Heart left ventricle (tissue), 16 donors: ENCODE measurements at regions of chr4 and their contacts with region 1.

Region 1: DNA sequence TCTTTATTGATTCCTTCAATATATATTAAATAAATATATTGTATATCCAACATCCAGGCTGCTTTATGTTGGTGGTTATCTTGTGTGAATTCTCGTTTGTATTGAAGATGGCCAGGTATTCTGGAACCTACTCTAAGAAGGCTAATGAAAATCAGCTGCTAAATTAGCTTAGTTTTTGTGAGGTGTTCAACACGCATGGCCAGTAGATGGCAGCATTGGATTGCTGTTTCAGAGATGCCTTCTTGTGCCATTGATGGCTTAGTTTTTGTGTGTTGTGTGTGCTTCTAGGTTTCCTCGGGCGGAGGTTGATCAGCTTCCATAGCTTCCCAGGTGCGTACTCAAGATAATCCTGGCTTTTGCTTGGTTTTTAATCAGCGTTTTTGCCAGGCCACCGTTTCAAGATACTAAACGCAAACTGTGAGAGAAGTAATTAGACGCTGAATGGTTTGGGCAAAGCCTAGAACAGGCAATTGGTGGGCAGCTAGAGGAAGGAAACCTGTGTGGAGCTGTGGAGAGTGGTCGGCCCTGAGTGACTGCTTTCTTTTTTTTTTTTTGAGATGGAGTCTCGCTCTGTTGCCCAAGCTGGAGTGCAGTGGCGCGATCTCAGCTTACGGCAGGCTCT is 15.1 kb downstream of the NOCT start:
- DNase-seq: peak in 4 of 5 donors; percentile 63 to 75 (median 66)
- ATAC-seq: peak in 3 of 4 donors; percentile 28 to 47 (median 33)
- H3K4me3 ChIP-seq: no peak overlapping the region
- H3K27ac ChIP-seq: peak overlapping the region in 2 of 12 donors; percentile 90 to 93
- H3K4me1 ChIP-seq: peaks cover 0 to 20% (median 11%) of the 10 kb centered on the region in 12 donors
- H3K27me3 ChIP-seq: no peaks in the 10 kb centered on the region
- CTCF ChIP-seq: peak; percentile 61 to 87 (median 79)
- POLR2A ChIP-seq: no peak

Region 2: DNA sequence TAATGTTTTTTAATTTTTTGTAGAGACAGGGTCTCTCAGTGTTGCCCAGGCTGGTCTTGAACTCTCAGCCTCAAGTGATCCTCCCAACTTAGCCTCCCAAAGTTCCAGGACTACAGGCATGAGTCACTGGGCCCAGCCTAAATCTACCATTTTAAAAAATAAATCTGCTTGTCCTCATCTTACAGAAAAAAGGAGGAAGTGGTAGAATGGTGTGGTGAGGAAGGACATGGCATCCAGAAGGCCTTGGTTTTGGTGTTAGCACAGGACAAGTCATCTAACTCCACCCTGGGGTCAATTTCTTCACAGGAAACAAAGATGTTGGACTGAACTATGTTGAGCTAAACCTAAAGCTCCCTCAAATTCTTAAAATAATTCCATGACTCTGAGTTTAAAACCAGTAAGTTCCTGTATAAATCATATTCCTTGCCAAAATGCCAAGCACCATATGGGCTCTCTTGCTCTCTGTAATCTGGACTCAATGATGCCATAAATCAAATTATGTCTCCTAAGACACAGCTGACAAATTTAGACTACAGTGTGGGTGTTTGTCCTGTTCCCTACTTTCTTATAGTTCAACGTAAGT is 269.0 kb before region 1 on chr4:
- intact Hi-C with region 1: no loop called
- DNase-seq: no peak
- ATAC-seq: no peak
- H3K4me3 ChIP-seq: no peak overlapping the region
- H3K27ac ChIP-seq: no peak overlapping the region
- H3K4me1 ChIP-seq: no peaks in the 10 kb centered on the region
- H3K27me3 ChIP-seq: no peaks in the 10 kb centered on the region
- CTCF ChIP-seq: no peak
- POLR2A ChIP-seq: no peak

Region 3: GRCh38 chr4:139083956-139084803 is 53.5 kb after region 1 on chr4:
- intact Hi-C with region 1: loop called (anchors 2 to 10 kb)
- DNase-seq: peak; percentile 89 to 95 (median 92)
- ATAC-seq: peak; percentile 57 to 89 (median 78)
- H3K4me3 ChIP-seq: peak overlapping the region; percentile 72 to 94 (median 82)
- H3K27ac ChIP-seq: peak overlapping the region; percentile 80 to 97 (median 94)
- H3K4me1 ChIP-seq: peaks cover 0 to 38% (median 29%) of the 10 kb centered on the region in 12 donors
- H3K27me3 ChIP-seq: no peaks in the 10 kb centered on the region
- CTCF ChIP-seq: peak in 10 of 12 donors; percentile 15 to 54 (median 39)
- POLR2A ChIP-seq: peak in 1 of 2 donors; percentile 30

Region 4: DNA sequence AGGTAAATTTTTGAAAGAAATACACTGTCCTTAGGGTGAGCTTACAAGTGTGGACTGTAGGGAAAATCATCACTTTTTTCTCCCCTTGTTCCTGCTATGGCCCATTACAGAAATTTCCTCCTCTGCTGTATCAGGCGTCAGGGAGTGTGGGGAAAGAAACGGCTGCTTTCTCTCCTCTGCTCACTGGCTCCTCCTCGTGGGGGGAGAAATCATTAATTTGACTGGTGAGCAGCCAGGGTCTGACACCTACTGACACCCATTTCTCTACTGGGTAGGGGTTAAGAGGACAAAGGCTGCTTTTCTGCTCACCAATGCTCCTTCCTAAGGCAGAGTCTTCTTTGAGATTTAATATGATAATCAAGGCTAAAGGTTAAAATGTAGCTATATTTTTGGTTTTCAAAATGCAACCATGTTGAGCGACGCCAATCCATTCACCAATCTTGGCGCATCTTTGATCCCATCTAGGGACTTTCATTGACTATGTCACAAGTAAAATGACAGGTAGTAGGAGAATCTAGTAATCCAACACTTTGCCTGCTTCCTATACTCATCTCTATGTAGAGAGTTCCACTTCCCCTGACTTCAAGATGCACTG is 500.2 kb after region 1 on chr4:
- intact Hi-C with region 1: loop called in 1 of 10 experiments (anchors 10 kb)
- DNase-seq: peak in 4 of 5 donors; percentile 30 to 53 (median 42)
- ATAC-seq: peak; percentile 22 to 56 (median 54)
- H3K4me3 ChIP-seq: no peak overlapping the region
- H3K27ac ChIP-seq: no peak overlapping the region
- H3K4me1 ChIP-seq: peaks cover 0 to 24% (median 0%) of the 10 kb centered on the region in 12 donors
- H3K27me3 ChIP-seq: no peaks in the 10 kb centered on the region
- CTCF ChIP-seq: peak; percentile 45 to 74 (median 59)
- POLR2A ChIP-seq: no peak

Region 5: GRCh38 chr4:139651282-139652194 is 620.8 kb after region 1 on chr4:
- intact Hi-C with region 1: loop called in 2 of 10 experiments (anchors 5 to 10 kb)
- DNase-seq: peak; percentile 81 to 92 (median 84)
- ATAC-seq: peak; percentile 75 to 90 (median 86)
- H3K4me3 ChIP-seq: peak overlapping the region in 5 of 12 donors; percentile 6 to 43 (median 26)
- H3K27ac ChIP-seq: no peak overlapping the region
- H3K4me1 ChIP-seq: peaks cover 0 to 10% (median under 1%) of the 10 kb centered on the region in 12 donors
- H3K27me3 ChIP-seq: no peaks in the 10 kb centered on the region
- CTCF ChIP-seq: peak; percentile 85 to 96 (median 92)
- POLR2A ChIP-seq: no peak